ENCODE measurements at regions of chr19 and their contacts with region 1.

Region 1: DNA sequence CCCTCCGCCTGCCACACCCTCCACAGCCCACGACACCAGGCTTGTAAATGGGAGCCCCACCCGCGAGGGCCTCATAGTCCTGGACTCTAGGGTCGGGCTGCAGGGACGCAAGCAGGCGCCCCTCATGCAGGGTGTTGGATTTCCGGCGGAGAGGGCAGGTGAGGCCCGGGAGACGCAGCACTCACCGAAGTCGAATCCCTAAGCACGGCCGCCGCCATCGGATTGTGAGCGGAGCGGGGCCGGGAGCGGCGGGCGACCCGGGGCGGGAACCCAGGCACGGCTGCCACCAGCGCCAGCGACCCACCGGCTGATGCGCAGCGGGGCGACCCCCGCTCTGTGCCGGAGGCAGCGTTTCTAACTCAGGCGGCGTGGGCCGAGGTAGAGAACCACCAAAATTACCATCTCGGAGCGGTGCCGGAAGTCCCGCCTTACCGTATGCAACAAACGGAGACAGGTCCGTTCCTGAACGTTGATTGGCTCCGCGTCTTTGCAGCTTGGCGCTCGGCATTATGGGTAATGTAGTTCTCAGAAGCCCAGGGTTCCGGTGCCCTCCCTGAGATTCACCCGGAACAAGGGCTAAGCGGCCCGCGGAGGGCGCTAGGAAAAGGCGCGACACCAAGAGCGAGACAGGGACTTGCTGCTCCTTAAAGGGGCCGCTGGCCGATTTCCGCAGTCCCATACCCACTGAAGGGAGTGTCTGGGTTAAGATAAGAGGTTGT is at the start of gene ZNF416:
- DNase-seq: peak; percentile 99
- ATAC-seq: peak; percentile 97
- H3K4me3 ChIP-seq: peak within 1 kb of the TSS; percentile 76
- H3K27ac ChIP-seq: no peak within 1 kb of the TSS
- H3K4me1 ChIP-seq: peaks cover 4% of the 10 kb centered on the region; the same call in 1 of the 2 replicates
- H3K27me3 ChIP-seq: no peaks in the 10 kb centered on the region
- CTCF ChIP-seq: peak; percentile 43
- total RNA-seq, gene ZNF416: 2.4 and 3.6 TPM in 2 replicates

Region 2: GRCh38 chr19:57527136-57527881 is 51.3 kb before region 1 on chr19 and contains the start of gene ZNF549:
- CTCF ChIA-PET with region 1: no interaction called
- POLR2A ChIA-PET with region 1: no interaction called
- intact Hi-C with region 1: loop called (anchors 1 kb)
- DNase-seq: peak; percentile 97
- ATAC-seq: peak; percentile 100
- H3K4me3 ChIP-seq: peak within 1 kb of the TSS; percentile 86
- H3K27ac ChIP-seq: peak within 1 kb of the TSS; percentile 50
- H3K4me1 ChIP-seq: no peaks in the 10 kb centered on the region
- H3K27me3 ChIP-seq: no peaks in the 10 kb centered on the region
- CTCF ChIP-seq: no peak
- total RNA-seq, gene ZNF549: 4.3 and 5.0 TPM in 2 replicates

Region 3: GRCh38 chr19:57559404-57560025 is 19.1 kb before region 1 on chr19 and contains the start of gene ZNF550:
- CTCF ChIA-PET with region 1: no interaction called
- POLR2A ChIA-PET with region 1: no interaction called
- intact Hi-C with region 1: loop called (anchors 1 kb)
- DNase-seq: peak; percentile 88
- ATAC-seq: peak; percentile 99
- H3K4me3 ChIP-seq: peak within 1 kb of the TSS; percentile 96
- H3K27ac ChIP-seq: peak within 1 kb of the TSS; percentile 60
- H3K4me1 ChIP-seq: peaks cover 9% of the 10 kb centered on the region; the same call in 1 of the 2 replicates
- H3K27me3 ChIP-seq: no peaks in the 10 kb centered on the region
- CTCF ChIP-seq: no peak
- total RNA-seq, gene ZNF550: 3.1 and 4.2 TPM in 2 replicates

Region 4: DNA sequence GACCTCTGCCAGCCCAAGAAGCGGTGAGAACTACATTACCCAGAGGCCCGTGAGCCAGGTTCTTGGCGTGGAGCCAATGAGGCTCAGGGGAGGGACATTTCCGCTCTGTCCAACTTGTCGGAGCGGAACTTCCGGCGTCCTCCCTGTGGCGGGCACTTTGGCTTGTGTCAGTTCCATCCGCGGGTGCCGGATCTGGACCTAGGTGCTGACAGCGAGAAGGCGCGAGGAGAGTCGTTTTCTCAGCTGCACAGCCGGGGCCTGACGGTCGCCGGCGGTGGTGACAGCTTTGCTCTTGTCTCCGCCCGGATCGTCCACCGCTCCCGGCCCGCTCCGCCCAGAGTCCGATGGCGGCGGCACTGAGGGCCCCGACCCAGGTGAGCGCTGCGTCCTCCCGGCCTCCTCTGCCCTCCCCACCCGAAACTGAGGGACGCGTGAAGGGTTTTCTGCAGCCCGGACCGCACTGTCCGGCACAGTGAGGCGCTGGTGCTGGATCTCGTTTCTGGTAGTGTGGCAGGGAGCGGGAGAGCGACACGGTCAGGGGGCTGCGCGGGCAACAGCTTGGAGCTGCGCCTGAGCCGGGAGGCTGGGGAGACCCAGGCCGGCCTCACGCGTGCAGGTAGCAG is 21.2 kb after region 1 on chr19 and contains the start of gene ZNF530:
- CTCF ChIA-PET with region 1: no interaction called
- POLR2A ChIA-PET with region 1: no interaction called
- intact Hi-C with region 1: loop called (anchors 1 kb)
- DNase-seq: peak; percentile 98
- ATAC-seq: peak; percentile 99
- H3K4me3 ChIP-seq: peak within 1 kb of the TSS; percentile 84
- H3K27ac ChIP-seq: no peak within 1 kb of the TSS
- H3K4me1 ChIP-seq: peaks cover 7% of the 10 kb centered on the region; the same call in 1 of the 2 replicates
- H3K27me3 ChIP-seq: no peaks in the 10 kb centered on the region
- CTCF ChIP-seq: no peak
- total RNA-seq, gene ZNF530: 15.0 and 16.9 TPM in 2 replicates

Region 5: DNA sequence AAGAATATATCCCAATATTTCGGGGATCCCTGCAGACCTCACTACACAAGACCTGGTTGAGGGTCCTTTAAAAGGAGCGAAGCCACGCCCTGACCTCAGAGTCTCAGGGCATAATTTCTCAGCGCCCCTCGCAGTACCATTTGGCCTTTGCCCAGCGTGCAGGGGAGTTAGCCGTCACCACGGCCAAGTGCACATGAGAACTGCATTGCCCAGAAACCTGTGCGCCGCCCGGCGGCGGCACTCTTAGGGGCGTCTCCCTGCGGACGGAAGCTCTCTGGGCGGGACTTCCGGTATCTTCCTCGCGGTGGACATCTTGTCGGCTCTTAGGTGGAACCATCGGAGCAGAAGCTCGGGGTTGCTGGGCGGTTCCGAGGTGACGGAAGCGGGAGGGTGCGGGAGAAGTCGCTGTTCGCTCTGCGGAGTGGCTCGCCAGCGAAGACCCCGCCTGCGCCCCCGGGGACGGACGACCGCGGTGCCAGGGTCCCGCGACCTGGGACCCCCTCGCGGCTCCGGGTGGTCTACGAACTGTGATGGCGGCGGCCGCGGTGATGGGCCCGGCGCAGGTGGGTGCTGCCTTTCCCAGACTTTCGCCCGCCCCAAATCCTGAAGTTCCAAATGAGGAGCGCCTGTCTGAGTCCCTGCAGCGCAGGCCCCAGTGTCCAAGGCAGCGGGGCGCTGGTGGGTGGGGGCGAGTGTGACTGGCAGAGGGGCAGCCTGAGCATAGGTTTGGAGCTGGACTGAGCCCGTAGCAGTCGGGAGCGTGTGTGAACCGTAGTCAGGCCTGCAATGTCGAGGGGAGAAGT is 35.5 kb after region 1 on chr19 and contains the start of gene ZNF134:
- CTCF ChIA-PET with region 1: no interaction called
- POLR2A ChIA-PET with region 1: no interaction called
- intact Hi-C with region 1: loop called (anchors 1 kb)
- DNase-seq: peak; percentile 95
- ATAC-seq: peak; percentile 100
- H3K4me3 ChIP-seq: peak within 1 kb of the TSS; percentile 91
- H3K27ac ChIP-seq: no peak within 1 kb of the TSS
- H3K4me1 ChIP-seq: no peaks in the 10 kb centered on the region
- H3K27me3 ChIP-seq: no peaks in the 10 kb centered on the region
- CTCF ChIP-seq: no peak; the same call in 1 of the 2 replicates
- total RNA-seq, gene ZNF134: 22.2 and 22.3 TPM in 2 replicates

Region 6: GRCh38 chr19:57746580-57747471 is 168.2 kb after region 1 on chr19 and contains the start of gene ZNF776:
- CTCF ChIA-PET with region 1: no interaction called
- POLR2A ChIA-PET with region 1: no interaction called
- intact Hi-C with region 1: loop called (anchors 5 kb)
- DNase-seq: peak; percentile 96
- ATAC-seq: peak; percentile 99
- H3K4me3 ChIP-seq: peak within 1 kb of the TSS; percentile 92
- H3K27ac ChIP-seq: peak within 1 kb of the TSS; percentile 19; the same call in 1 of the 2 replicates
- H3K4me1 ChIP-seq: peaks cover 8% of the 10 kb centered on the region; the same call in 1 of the 2 replicates
- H3K27me3 ChIP-seq: no peaks in the 10 kb centered on the region
- CTCF ChIP-seq: no peak
- total RNA-seq, gene ZNF776: 14.1 and 17.3 TPM in 2 replicates

Measured in PC-3 (cell line).